Activated CD4-positive, alpha-beta T cell treated with anti-CD3 and anti-CD28 coated beads, Interleukin-2, amount 10 ng/mL, durations not matched to agents 24 days and 14 days (primary cell): ENCODE measurements at regions of chr12 and their contacts with region 1.

Region 1: GRCh38 chr12:133037207-133038005 is at the start of gene ZNF84:
- DNase-seq: peak; percentile 99
- H3K4me3 Mint-ChIP-seq: peak within 1 kb of the TSS; percentile 94
- H3K27ac Mint-ChIP-seq: peak within 1 kb of the TSS; percentile 99
- H3K4me1 Mint-ChIP-seq: peaks cover 11% of the 10 kb centered on the region
- H3K27me3 Mint-ChIP-seq: peaks cover 3% of the 10 kb centered on the region
- total RNA-seq, gene ZNF84: 20.1 and 23.1 TPM in 2 replicates

Region 2: DNA sequence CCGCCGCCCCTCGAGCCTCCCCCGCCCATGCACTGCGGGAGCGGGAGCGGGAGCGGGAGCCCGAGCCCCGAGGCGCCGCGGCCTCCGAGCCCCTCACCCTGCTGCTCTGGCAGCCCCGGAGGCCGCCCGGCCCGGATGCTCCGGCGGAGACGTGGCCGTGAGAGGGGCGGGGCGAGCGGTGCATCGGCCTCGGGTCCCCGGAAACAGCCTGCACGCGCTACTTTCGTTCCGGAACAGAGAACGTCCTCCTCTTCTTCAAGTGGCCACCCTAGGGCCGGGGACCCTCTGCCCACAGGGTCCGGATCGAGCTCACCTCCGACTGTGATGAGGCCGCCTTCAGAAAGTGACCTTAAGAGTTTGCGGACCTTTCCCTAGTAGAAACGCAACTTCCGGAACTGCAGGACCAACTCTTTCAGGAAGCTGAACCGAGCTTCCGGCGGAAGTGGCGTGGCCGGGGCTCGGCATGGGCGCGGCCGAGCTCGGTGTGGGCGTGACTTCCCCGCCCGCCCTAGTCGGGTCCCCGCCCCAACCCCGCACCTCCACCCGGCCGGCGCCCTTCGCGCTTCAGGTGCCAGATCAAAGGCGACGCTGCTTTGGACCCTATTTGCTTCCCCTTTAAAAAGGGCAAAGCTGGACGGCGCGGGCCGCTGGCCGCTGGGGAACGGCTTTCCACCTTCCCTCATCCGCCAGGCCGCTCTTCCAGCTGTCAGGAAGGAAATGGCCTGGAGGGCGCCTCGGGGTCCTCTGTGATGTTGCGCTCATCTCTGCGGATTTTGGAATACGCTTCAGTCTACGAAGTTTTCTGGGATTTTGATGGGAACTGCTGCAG is 208.5 kb before region 1 on chr12 and contains the start of gene GOLGA3:
- intact Hi-C with region 1: loop called (anchors 2 kb)
- DNase-seq: peak; percentile 98
- H3K4me3 Mint-ChIP-seq: peak within 1 kb of the TSS; percentile 98
- H3K27ac Mint-ChIP-seq: peak within 1 kb of the TSS; percentile 100
- H3K4me1 Mint-ChIP-seq: peaks cover 30% of the 10 kb centered on the region
- H3K27me3 Mint-ChIP-seq: no peaks in the 10 kb centered on the region
- total RNA-seq, gene GOLGA3: 67.6 and 68.1 TPM in 2 replicates

Region 3: DNA sequence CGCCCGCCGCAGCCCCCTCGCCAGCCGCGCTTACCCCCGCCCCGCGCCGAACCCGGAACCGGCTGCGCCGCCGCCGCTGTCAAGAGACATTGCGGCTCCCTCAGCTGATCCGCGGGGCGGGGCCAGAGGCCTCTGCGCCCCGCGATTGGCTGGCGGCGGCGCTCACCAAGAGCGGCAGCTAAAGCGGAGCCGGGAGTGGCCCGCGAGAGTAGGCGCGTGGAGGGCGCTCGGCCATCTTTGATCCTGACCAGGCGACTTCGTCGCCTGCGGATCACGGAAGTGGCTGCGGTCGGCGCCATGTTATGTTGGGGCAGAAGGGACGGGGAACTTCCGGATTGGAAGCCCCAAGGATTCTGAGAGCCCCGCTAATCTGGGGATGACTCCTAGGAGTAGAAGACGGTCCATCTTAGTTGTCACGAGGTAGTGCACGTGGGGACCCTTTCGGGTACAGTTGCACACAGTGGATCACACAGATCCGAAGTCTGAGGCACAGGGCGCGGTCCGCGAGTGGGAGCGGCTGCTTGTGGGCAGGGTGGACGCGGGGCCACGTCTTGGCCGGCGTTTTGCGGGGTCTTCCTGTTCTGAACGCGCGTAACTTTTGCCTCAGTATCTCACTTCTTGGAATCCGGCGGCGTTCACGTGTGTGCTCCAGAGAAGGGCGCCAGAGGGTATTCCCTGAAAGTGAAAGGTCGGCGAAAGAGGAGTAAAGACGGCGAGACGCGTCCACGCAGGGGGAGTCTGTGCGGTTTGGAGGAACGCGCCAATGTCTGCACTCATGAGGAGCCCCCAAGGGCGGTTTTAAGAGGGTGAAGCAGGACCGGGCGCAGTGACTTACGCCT is 149.7 kb before region 1 on chr12 and contains the start of gene CHFR:
- intact Hi-C with region 1: loop called (anchors 1 kb)
- DNase-seq: peak; percentile 98
- H3K4me3 Mint-ChIP-seq: peak within 1 kb of the TSS; percentile 98
- H3K27ac Mint-ChIP-seq: peak within 1 kb of the TSS; percentile 99
- H3K4me1 Mint-ChIP-seq: peaks cover 13% of the 10 kb centered on the region
- H3K27me3 Mint-ChIP-seq: no peaks in the 10 kb centered on the region
- total RNA-seq, gene CHFR: 52.9 and 60.7 TPM in 2 replicates

Region 4: GRCh38 chr12:132956011-132956788 is 81.2 kb before region 1 on chr12 and contains the start of gene ZNF605:
- intact Hi-C with region 1: loop called (anchors 1 kb)
- DNase-seq: peak; percentile 96
- H3K4me3 Mint-ChIP-seq: peak within 1 kb of the TSS; percentile 98
- H3K27ac Mint-ChIP-seq: peak within 1 kb of the TSS; percentile 95
- H3K4me1 Mint-ChIP-seq: peaks cover 19% of the 10 kb centered on the region
- H3K27me3 Mint-ChIP-seq: no peaks in the 10 kb centered on the region
- total RNA-seq, gene ZNF605: 6.6 and 7.6 TPM in 2 replicates

Region 5: GRCh38 chr12:132986001-132986912 is 51.1 kb before region 1 on chr12 and contains the start of gene ZNF26:
- intact Hi-C with region 1: loop called (anchors 1 kb)
- DNase-seq: peak; percentile 96
- H3K4me3 Mint-ChIP-seq: peak within 1 kb of the TSS; percentile 86
- H3K27ac Mint-ChIP-seq: peak within 1 kb of the TSS; percentile 95
- H3K4me1 Mint-ChIP-seq: peaks cover 21% of the 10 kb centered on the region
- H3K27me3 Mint-ChIP-seq: no peaks in the 10 kb centered on the region
- total RNA-seq, gene ZNF26: 18.3 and 20.1 TPM in 2 replicates

Region 6: GRCh38 chr12:133063556-133063955 is 26.1 kb after region 1 on chr12:
- intact Hi-C with region 1: no loop called
- DNase-seq: no peak
- H3K4me3 Mint-ChIP-seq: no peak overlapping the region
- H3K27ac Mint-ChIP-seq: no peak overlapping the region
- H3K4me1 Mint-ChIP-seq: no peaks in the 10 kb centered on the region
- H3K27me3 Mint-ChIP-seq: no peaks in the 10 kb centered on the region

Region 7: DNA sequence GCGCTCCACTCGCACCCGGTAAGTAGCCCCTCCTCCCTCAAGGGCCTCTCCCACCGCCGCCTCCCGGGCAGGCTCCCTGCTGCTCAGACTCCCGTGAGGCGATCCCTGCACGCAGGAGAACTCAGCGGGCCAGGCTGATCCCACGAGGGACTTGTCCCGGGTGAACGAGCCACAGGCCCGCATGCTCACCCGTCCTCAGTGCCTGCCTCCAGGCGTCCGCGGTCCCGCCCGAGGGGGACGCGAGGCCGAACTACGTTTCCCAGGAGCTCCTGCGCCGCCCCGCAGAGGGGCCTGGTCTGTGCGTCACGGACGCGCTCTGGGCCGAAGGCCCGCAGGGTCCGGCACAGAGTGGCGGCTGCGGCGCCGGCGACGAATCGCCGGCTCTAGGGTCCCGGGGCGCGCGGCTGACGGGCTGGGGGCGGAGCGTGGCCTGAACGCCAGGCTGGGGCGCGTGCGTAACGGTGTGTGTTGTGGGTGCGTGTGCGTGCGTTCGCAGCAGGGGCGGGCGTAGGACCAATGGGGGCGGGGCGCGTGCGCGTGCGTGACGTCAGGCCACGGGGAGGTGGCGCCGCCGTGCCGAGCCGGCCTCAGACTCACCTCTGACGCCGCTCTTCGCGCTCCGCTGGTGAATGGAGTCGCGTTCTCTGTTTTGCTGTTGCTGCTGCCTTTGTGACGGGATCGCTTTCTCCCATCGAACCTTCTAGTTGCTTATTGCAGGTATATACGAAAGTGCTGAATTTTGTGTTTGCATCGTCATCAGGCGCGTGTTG is 92.8 kb after region 1 on chr12 and contains the starts of genes ZNF10 and ZNF891:
- intact Hi-C with region 1: loop called (anchors 1 kb)
- DNase-seq: peak; percentile 99
- H3K4me3 Mint-ChIP-seq: peak within 1 kb of the TSS; percentile 98
- H3K27ac Mint-ChIP-seq: peak within 1 kb of the TSS; percentile 99
- H3K4me1 Mint-ChIP-seq: peaks cover 11% of the 10 kb centered on the region
- H3K27me3 Mint-ChIP-seq: no peaks in the 10 kb centered on the region
- total RNA-seq, gene ZNF10: 3.3 and 4.2 TPM in 2 replicates
- total RNA-seq, gene ZNF891: 2.2 and 2.4 TPM in 2 replicates

Region 8: GRCh38 chr12:133181238-133181959 is 144.0 kb after region 1 on chr12 and contains the start of gene ZNF268:
- intact Hi-C with region 1: loop called (anchors 1 kb)
- DNase-seq: peak; percentile 98
- H3K4me3 Mint-ChIP-seq: peak within 1 kb of the TSS; percentile 92
- H3K27ac Mint-ChIP-seq: peak within 1 kb of the TSS; percentile 93
- H3K4me1 Mint-ChIP-seq: peaks cover 6% of the 10 kb centered on the region
- H3K27me3 Mint-ChIP-seq: no peaks in the 10 kb centered on the region
- total RNA-seq, gene ZNF268: 17.2 and 19.4 TPM in 2 replicates

Region 9: GRCh38 chr12:133235401-133236112 is 198.2 kb after region 1 on chr12 and contains the start of gene ANHX:
- intact Hi-C with region 1: no loop called
- DNase-seq: no peak
- H3K4me3 Mint-ChIP-seq: no peak within 1 kb of the TSS
- H3K27ac Mint-ChIP-seq: no peak within 1 kb of the TSS
- H3K4me1 Mint-ChIP-seq: no peaks in the 10 kb centered on the region
- H3K27me3 Mint-ChIP-seq: no peaks in the 10 kb centered on the region
- total RNA-seq, gene ANHX: not detected in 2 replicates